CD14-positive monocyte (primary cell): ENCODE measurements at regions of chr13 and their contacts with region 1.

Region 1: GRCh38 chr13:80363890-80364503 is 23.1 kb upstream of the SPRY2 start:
- DNase-seq: peak in 1 of 3 donors; percentile 15
- H3K4me3 ChIP-seq: no peak overlapping the region
- H3K4me3 Mint-ChIP-seq: no peak overlapping the region
- H3K27ac ChIP-seq: no peak overlapping the region
- H3K27ac Mint-ChIP-seq: no peak overlapping the region
- H3K4me1 ChIP-seq: no peaks in the 10 kb centered on the region
- H3K4me1 Mint-ChIP-seq: peaks cover 13% of the 10 kb centered on the region
- H3K27me3 ChIP-seq: no peaks in the 10 kb centered on the region
- H3K27me3 Mint-ChIP-seq: peaks cover 0 to 3% (median 2%) of the 10 kb centered on the region in 3 donors
- CTCF ChIP-seq: peak; percentile 83

Region 2: GRCh38 chr13:79679334-79679733 is 684.7 kb before region 1 on chr13:
- intact Hi-C with region 1: loop called (anchors 5 kb)
- DNase-seq: peak; percentile 14 to 59 (median 52)
- H3K4me3 ChIP-seq: no peak overlapping the region
- H3K4me3 Mint-ChIP-seq: no peak overlapping the region
- H3K27ac ChIP-seq: no peak overlapping the region
- H3K27ac Mint-ChIP-seq: no peak overlapping the region
- H3K4me1 ChIP-seq: no peaks in the 10 kb centered on the region
- H3K4me1 Mint-ChIP-seq: no peaks in the 10 kb centered on the region
- H3K27me3 ChIP-seq: no peaks in the 10 kb centered on the region
- H3K27me3 Mint-ChIP-seq: peaks cover 0 to 2% (median 2%) of the 10 kb centered on the region in 3 donors
- CTCF ChIP-seq: peak; percentile 91

Region 3: DNA sequence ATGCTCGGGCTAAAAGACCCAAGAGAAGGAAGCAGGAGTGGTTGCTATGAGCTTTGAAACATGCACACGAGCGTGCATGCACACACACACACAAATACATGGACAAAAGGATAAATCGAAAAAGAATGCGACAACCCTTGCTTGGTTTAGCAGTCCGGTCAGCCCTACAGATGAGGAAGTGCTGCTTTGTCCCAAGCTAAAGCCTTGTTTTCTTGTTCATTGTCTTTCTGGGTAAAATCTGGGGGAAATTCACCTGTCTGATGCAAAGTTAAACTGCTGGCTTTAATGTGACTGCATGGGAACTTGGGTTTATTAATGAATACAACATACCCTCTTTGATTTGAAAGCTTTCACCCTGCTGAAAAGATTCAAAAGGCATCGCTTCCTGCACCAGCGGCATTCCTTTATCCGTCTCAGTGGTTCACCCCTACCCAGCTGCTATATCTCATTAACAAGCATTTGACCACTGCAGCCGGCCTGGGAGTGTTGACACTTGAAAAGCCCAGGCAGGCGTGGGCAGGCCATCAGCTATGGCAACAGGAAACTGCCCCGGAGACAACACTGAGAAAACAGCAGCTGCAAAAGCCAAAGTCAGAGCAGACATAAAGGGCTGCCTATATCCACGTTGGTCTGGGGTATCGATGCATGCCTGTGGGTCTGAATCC is 581.3 kb before region 1 on chr13:
- intact Hi-C with region 1: loop called in 1 of 2 experiments (anchors 10 kb)
- DNase-seq: no peak
- H3K4me3 ChIP-seq: no peak overlapping the region
- H3K4me3 Mint-ChIP-seq: no peak overlapping the region
- H3K27ac ChIP-seq: no peak overlapping the region
- H3K27ac Mint-ChIP-seq: no peak overlapping the region
- H3K4me1 ChIP-seq: peaks cover 10 to 11% of the 10 kb centered on the region in 2 donors
- H3K4me1 Mint-ChIP-seq: peaks cover 13% of the 10 kb centered on the region
- H3K27me3 ChIP-seq: no peaks in the 10 kb centered on the region
- H3K27me3 Mint-ChIP-seq: peaks cover 0 to 2% (median 0%) of the 10 kb centered on the region in 3 donors
- CTCF ChIP-seq: no peak

Region 4: DNA sequence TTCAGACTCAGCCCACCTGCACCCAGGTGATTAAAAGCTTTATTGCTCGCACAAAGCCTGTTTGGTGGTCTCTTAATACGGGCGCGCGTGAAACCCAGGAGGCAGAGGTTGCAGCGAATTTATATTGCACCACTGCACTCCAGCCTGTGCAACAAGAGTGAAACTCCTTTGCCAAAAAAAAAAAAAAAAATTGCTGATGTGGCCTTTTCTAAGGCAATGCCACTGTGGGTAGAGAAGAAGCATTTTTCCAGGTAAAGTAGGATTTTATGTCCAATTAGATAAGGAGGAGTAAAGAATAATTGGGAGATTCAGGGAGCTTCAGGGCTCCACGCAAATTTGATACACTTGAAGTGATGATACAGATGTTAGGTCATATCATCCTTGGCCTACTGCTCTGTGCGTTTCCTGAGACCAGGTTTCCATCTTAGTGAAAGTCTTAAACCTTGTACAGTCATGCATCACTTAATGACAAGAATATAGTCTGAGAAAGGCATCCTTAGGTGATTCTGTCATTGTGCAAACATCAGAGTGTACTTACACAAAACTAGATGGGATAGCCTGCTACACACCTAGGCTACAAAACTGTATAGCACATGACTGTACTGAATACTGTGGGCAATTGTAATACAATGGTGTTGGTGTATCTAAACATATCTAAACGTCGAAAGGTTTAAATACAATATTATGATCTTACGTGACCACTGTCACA is 174.0 kb before region 1 on chr13:
- intact Hi-C with region 1: no loop called
- DNase-seq: no peak
- H3K4me3 ChIP-seq: no peak overlapping the region
- H3K4me3 Mint-ChIP-seq: no peak overlapping the region
- H3K27ac ChIP-seq: no peak overlapping the region
- H3K27ac Mint-ChIP-seq: no peak overlapping the region
- H3K4me1 ChIP-seq: no peaks in the 10 kb centered on the region
- H3K4me1 Mint-ChIP-seq: no peaks in the 10 kb centered on the region
- H3K27me3 ChIP-seq: no peaks in the 10 kb centered on the region
- H3K27me3 Mint-ChIP-seq: no peaks in the 10 kb centered on the region
- CTCF ChIP-seq: no peak

Region 5: DNA sequence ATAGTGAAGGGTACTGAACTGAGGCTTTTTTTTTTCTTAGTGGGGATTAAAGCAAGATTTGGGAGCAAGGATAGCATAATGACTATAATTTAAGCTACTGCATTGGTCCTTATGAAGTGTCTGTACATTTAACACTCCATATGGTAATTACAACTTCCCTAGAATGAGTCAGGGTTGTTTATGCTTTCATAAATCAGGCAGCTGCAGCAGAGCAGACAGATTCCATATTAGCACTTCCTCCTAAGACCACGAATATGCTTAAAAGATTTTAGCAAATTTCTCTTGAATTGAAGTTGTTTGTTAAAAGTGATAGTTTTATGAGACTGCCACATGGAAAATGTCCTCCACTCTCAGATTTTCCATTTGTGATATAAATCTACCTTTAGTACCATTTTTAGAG is 378.0 kb after region 1 on chr13:
- intact Hi-C with region 1: no loop called
- DNase-seq: no peak
- H3K4me3 ChIP-seq: no peak overlapping the region
- H3K4me3 Mint-ChIP-seq: no peak overlapping the region
- H3K27ac ChIP-seq: no peak overlapping the region
- H3K27ac Mint-ChIP-seq: no peak overlapping the region
- H3K4me1 ChIP-seq: no peaks in the 10 kb centered on the region
- H3K4me1 Mint-ChIP-seq: peaks cover 2% of the 10 kb centered on the region
- H3K27me3 ChIP-seq: no peaks in the 10 kb centered on the region
- H3K27me3 Mint-ChIP-seq: peaks cover 0 to 1% (median 0%) of the 10 kb centered on the region in 3 donors
- CTCF ChIP-seq: no peak

Region 6: DNA sequence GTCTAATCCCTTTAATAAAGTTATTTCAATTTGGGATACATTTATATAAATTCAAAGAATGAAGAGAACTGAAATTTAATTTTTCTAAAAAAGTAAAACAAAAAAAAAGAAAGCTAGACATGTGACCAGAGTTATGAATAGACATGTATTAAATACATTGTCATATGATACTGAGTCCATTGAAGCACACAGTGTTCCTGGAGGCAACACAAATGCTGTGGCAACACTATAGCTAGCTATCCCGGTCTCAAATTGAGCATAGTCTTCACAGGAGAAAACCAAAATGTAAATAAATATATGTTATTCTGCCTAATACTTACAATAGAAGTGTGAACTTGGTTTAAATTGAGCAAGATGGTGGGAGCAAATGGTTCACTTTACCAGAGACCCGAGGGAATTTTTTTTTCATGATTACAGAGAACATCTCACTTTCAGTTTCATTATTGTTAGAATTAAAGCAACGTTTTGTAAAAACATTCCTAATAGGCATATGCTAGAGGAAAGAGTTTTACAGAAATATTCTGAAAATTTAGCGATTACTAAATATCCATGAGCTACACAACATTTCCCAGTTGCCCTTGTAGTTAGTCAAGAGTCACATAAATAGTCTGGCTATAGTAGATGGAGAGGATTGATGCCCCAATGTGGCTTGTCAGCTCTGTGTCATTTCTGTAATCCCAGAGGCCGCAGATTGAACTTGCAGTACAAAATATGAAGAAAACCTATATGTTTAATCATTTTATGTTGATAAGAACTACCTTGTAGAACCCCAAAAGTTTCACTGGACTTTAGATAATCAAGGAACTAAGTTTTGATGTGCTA is 752.7 kb after region 1 on chr13:
- intact Hi-C with region 1: no loop called
- DNase-seq: no peak
- H3K4me3 ChIP-seq: no peak overlapping the region
- H3K4me3 Mint-ChIP-seq: no peak overlapping the region
- H3K27ac ChIP-seq: no peak overlapping the region
- H3K27ac Mint-ChIP-seq: no peak overlapping the region
- H3K4me1 ChIP-seq: no peaks in the 10 kb centered on the region
- H3K4me1 Mint-ChIP-seq: no peaks in the 10 kb centered on the region
- H3K27me3 ChIP-seq: no peaks in the 10 kb centered on the region
- H3K27me3 Mint-ChIP-seq: no peaks in the 10 kb centered on the region
- CTCF ChIP-seq: no peak